Sciatic nerve (tissue), 2 donors: ENCODE measurements at regions of chr18 and their contacts with region 1.

Region 1: DNA sequence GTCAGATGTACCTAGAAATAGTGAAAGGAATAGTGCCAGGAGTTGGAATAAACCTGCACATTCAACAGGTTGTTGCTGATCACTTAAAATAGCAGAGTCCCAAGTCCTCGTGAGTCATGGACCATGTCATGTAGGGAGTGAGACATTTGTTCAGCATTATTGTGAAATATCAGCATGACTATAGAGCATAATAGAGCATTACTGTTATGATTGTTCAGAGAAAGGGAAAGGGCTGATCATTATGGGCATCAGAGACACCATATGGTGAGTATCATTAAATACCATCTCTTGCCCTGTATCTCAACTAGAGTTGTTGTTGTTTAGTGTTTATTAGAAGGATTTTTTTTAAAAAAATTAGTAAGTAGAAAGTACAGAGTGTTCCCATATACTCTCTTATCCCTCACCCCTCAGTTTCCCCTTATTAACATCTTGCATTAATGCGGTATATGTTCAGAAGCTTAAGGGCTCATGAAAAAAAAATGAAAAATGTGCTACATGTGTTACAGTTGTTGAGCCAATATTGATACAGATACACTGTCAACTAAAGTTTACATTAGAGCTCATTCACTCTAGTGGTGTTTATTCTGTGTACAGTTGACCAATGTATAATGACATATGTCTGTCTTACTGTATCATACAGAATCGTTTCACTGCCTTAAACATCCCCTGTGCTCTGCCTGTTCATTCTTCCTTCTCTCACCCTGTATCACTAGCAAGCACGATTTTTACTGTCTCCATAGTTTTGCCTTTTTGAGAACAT is 5.7 kb downstream of the ELAC1 start:
- DNase-seq: no peak
- ATAC-seq: no peak

Region 2: GRCh38 chr18:51006061-51006818 is 32.7 kb after region 1 on chr18:
- intact Hi-C with region 1: loop called (anchors 2 kb)
- DNase-seq: no peak
- ATAC-seq: no peak